CD14-positive monocyte (primary cell): ENCODE measurements at regions of chr21 and their contacts with region 1.

Region 1: GRCh38 chr21:16330082-16330907 is 600.5 kb downstream of the USP25 start:
- DNase-seq: peak; percentile 9 to 44 (median 20)
- H3K4me3 ChIP-seq: no peak overlapping the region
- H3K4me3 Mint-ChIP-seq: no peak overlapping the region
- H3K27ac ChIP-seq: no peak overlapping the region
- H3K27ac Mint-ChIP-seq: no peak overlapping the region
- H3K4me1 ChIP-seq: no peaks in the 10 kb centered on the region
- H3K4me1 Mint-ChIP-seq: no peaks in the 10 kb centered on the region
- H3K27me3 ChIP-seq: no peaks in the 10 kb centered on the region
- H3K27me3 Mint-ChIP-seq: peaks cover 0 to 3% (median 0%) of the 10 kb centered on the region in 3 donors
- CTCF ChIP-seq: peak; percentile 71

Region 2: DNA sequence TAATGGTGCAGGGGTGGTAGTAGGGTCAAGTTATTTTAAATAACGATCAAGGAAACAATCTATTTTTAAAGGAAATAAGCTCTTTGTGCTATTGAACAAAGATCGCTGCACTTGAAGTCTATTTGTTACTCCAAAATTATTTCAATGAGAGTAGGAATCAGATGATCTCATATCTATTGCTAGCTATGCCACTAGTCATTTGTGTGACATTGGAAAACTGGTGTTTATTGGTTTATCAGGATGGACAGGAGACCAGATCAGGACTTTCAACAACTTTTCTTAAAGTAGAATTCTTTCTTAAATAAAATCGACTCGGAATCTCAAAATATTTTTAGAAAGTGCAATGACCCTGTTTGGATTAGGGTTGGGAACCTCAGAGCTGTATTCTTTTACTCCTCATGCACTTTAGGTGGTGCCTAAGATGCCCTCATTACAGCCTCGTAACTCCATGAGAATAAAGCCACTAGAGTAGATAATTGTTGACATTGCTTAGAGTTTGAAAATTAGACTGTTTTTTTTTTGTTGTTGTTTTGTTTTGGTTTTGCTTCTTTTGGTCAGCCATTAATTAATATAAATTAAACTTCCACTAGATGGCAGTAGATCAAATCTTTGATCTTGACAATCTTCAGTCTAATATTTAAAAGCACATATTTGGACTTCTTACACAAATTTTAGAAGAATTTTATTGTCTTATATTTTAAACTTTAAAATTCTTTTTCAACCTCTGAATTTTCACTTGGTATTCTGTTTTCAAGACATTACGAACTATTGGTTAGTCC is 248.1 kb before region 1 on chr21:
- intact Hi-C with region 1: loop called (anchors 5 to 10 kb)
- DNase-seq: peak in 1 of 3 donors; percentile 28
- H3K4me3 ChIP-seq: no peak overlapping the region
- H3K4me3 Mint-ChIP-seq: no peak overlapping the region
- H3K27ac ChIP-seq: no peak overlapping the region
- H3K27ac Mint-ChIP-seq: no peak overlapping the region
- H3K4me1 ChIP-seq: no peaks in the 10 kb centered on the region
- H3K4me1 Mint-ChIP-seq: peaks cover 2% of the 10 kb centered on the region
- H3K27me3 ChIP-seq: no peaks in the 10 kb centered on the region
- H3K27me3 Mint-ChIP-seq: no peaks in the 10 kb centered on the region
- CTCF ChIP-seq: peak; percentile 67

Region 3: DNA sequence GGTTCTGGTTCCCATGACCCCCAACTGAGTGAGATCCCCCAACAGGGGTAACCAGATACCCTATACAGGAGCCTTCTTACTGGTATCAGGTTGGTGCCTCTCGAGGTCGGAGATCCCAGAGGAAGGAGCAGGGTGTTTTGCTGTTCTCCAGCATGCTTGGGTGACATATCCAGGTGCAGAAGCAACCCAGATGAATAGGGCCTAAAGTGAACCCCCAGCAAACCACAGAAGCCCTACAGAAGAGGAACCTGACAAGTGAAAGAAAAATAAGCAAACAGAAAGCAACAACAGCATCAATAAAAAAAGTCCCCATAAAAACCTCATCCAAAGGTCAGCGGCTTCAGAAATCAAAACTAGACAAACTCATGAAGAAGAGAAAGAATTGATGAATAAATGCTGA is 549.2 kb after region 1 on chr21:
- intact Hi-C with region 1: no loop called
- DNase-seq: no peak
- H3K4me3 ChIP-seq: no peak overlapping the region
- H3K4me3 Mint-ChIP-seq: no peak overlapping the region
- H3K27ac ChIP-seq: no peak overlapping the region
- H3K27ac Mint-ChIP-seq: no peak overlapping the region
- H3K4me1 ChIP-seq: no peaks in the 10 kb centered on the region
- H3K4me1 Mint-ChIP-seq: no peaks in the 10 kb centered on the region
- H3K27me3 ChIP-seq: no peaks in the 10 kb centered on the region
- H3K27me3 Mint-ChIP-seq: no peaks in the 10 kb centered on the region
- CTCF ChIP-seq: no peak